CD8-positive, alpha-beta T cell (primary cell): ENCODE measurements at regions of chr18 and their contacts with region 1.

Region 1: GRCh38 chr18:74171910-74172606 is 23.7 kb downstream of the TIMM21 start:
- DNase-seq: no peak
- ATAC-seq: no peak
- H3K4me3 ChIP-seq: no peak overlapping the region
- H3K4me3 Mint-ChIP-seq: peak overlapping the region; percentile 63
- H3K27ac ChIP-seq: no peak overlapping the region
- H3K27ac Mint-ChIP-seq: no peak overlapping the region
- H3K4me1 ChIP-seq: no peaks in the 10 kb centered on the region
- H3K4me1 Mint-ChIP-seq: peaks cover 7% of the 10 kb centered on the region
- H3K27me3 ChIP-seq: peaks cover 0 to 6% of the 10 kb centered on the region in 2 experiments
- H3K27me3 Mint-ChIP-seq: peaks cover 25% of the 10 kb centered on the region
- CTCF ChIP-seq: no peak

Region 2: GRCh38 chr18:74310411-74310810 is 138.4 kb after region 1 on chr18:
- CTCF ChIA-PET with region 1: no interaction called
- POLR2A ChIA-PET with region 1: no interaction called
- intact Hi-C with region 1: no loop called
- DNase-seq: peak in 2 of 9 experiments; percentile 41 to 55
- ATAC-seq: peak; percentile 73
- H3K4me3 ChIP-seq: no peak overlapping the region
- H3K4me3 Mint-ChIP-seq: no peak overlapping the region
- H3K27ac ChIP-seq: no peak overlapping the region
- H3K27ac Mint-ChIP-seq: no peak overlapping the region
- H3K4me1 ChIP-seq: no peaks in the 10 kb centered on the region
- H3K4me1 Mint-ChIP-seq: peaks cover 4% of the 10 kb centered on the region
- H3K27me3 ChIP-seq: no peaks in the 10 kb centered on the region
- H3K27me3 Mint-ChIP-seq: peaks cover 29% of the 10 kb centered on the region
- CTCF ChIP-seq: no peak

Region 3: GRCh38 chr18:74784752-74785151 is 612.7 kb after region 1 on chr18:
- CTCF ChIA-PET with region 1: no interaction called
- POLR2A ChIA-PET with region 1: no interaction called
- intact Hi-C with region 1: loop called in 1 of 2 experiments (anchors 5 kb)
- DNase-seq: no peak
- ATAC-seq: no peak
- H3K4me3 ChIP-seq: no peak overlapping the region
- H3K4me3 Mint-ChIP-seq: no peak overlapping the region
- H3K27ac ChIP-seq: no peak overlapping the region
- H3K27ac Mint-ChIP-seq: no peak overlapping the region
- H3K4me1 ChIP-seq: no peaks in the 10 kb centered on the region
- H3K4me1 Mint-ChIP-seq: no peaks in the 10 kb centered on the region
- H3K27me3 ChIP-seq: no peaks in the 10 kb centered on the region
- H3K27me3 Mint-ChIP-seq: no peaks in the 10 kb centered on the region
- CTCF ChIP-seq: no peak